HepG2 (cell line): ENCODE measurements at regions of chr2 and their contacts with region 1.

Region 1: DNA sequence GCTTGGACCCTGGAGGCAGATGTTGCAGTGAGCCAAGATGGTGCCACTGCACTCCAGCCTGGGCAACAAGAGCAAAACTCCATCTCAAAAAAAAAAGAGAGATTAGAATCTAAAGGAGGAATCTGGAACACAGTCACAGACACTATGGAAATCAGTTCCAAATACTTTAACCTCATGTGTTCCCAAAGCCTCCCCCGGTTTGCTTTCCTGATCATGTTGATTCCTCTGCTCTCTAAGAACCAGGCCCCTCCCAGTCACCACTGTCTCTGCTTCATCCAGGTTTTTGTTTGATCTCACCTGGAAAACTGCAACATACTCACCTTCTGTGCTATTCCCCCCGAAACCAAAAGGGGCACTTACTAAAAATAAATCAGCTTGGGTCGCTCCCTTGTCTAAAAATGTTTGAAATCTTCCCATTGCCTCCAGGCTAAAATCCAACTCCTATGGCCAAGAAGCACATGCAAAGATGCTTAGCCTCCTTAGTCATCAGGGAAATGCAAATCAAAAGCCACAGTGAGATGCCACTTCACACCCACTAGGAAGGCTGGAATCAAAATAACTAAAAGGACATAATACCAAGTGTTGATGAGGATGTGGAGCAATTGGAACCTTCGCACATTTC is 6.2 kb upstream of the NEU2 start:
- DNase-seq: no peak
- ATAC-seq: no peak
- H3K4me3 ChIP-seq: no peak overlapping the region
- H3K27ac ChIP-seq: no peak overlapping the region
- H3K4me1 ChIP-seq: peaks cover 3% of the 10 kb centered on the region; the same call in 1 of the 2 replicates
- H3K27me3 ChIP-seq: peaks cover 3 to 19% of the 10 kb centered on the region in 2 experiments; a peak in 4 of 5 replicates
- CTCF ChIP-seq: no peak
- EP300 ChIP-seq: no peak
- POLR2A ChIP-seq: no peak
- RAD21 ChIP-seq: no peak

Region 2: GRCh38 chr2:232979871-232980461 is 46.3 kb before region 1 on chr2:
- CTCF ChIA-PET with region 1: interaction called, 8 read pairs
- POLR2A ChIA-PET with region 1: no interaction called
- in situ Hi-C with region 1: no loop called
- intact Hi-C with region 1: loop called (anchors 1 kb)
- DNase-seq: peak; percentile 27
- ATAC-seq: peak; percentile 48
- H3K4me3 ChIP-seq: no peak overlapping the region
- H3K27ac ChIP-seq: no peak overlapping the region
- H3K4me1 ChIP-seq: no peaks in the 10 kb centered on the region
- H3K27me3 ChIP-seq: no peaks in the 10 kb centered on the region
- CTCF ChIP-seq: peak; percentile 36
- EP300 ChIP-seq: no peak
- POLR2A ChIP-seq: no peak
- RAD21 ChIP-seq: no peak

Region 3: DNA sequence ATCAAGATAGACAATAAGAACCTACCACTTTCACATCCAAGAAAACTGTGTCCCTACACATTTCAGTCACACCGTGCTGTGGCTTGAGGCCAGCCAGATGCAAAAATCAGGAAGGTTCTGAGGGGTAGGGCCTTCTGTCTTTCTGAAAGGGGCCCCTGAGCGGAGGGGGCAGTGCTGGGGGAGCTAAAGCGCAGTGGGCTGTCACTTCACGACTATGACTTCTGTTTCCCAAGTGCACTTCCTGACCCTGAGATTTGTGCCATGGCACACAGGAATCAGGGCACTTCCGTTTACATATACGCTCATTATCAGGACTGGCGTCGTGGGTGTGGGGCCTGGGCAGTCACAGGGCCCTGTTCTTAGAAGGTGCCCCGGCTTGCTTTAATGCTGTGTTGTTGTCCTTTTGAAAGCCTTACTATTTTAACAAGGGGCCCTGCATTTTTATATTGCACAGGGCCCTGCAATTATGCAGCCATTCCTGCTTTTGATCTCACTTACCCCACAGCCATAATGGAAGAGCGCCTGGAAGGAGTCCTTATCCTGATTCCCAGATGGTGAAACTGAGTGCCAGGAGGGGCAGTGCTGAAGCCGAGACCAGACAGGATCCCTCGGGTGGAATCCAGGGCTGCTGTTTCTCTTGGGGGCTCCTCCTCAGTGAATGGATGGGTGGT is 13.9 kb before region 1 on chr2:
- CTCF ChIA-PET with region 1: interaction called, 5 read pairs
- POLR2A ChIA-PET with region 1: interaction called, 23 read pairs
- in situ Hi-C with region 1: no loop called
- intact Hi-C with region 1: loop called (anchors 1 kb)
- DNase-seq: peak; percentile 65
- ATAC-seq: peak; percentile 53
- H3K4me3 ChIP-seq: peak overlapping the region; percentile 66 to 93 (median 80)
- H3K27ac ChIP-seq: peak overlapping the region; percentile 93
- H3K4me1 ChIP-seq: peaks cover 42% of the 10 kb centered on the region
- H3K27me3 ChIP-seq: no peaks in the 10 kb centered on the region; a peak in 1 of 5 replicates
- CTCF ChIP-seq: no peak
- EP300 ChIP-seq: peak in 1 of 2 experiments; percentile 55; a peak in 1 of 4 replicates
- POLR2A ChIP-seq: peak; percentile 34 to 42; a peak in 1 of 4 replicates
- RAD21 ChIP-seq: no peak

Region 4: DNA sequence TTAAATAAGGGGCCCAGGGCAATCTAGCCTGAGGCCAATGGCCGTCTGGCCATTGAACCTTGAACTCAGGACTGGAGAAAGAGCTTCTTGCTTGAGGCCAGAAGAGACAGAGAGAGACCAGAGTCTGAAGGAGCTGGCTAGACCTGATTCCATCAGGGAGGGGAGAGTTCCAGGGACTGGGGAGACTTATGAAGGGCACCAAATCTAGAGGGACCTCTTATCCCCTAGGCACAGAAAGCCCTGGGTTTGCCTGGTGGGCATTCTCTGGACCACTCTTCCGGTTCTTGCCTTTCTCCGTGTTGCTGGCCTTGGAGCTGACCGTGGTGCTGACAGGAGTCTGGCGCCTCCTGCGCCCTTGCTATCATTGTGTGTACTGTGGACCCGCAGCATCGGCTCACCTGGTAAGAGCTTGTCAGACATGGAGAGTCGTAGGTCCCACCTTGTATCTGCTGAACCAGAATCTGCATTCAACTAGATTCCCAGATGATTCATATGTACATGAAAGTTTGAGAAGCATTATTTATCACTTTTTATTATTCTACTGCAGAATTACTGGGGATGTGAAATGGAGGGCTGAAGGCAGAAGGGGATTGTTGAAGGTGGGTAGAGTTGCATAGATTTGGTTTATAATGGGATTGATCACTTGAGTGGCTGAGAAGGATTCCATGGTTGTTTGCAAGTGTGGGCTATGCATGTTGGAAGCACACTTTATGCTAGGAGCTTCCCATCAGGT is 886.6 kb after region 1 on chr2:
- CTCF ChIA-PET with region 1: no interaction called
- POLR2A ChIA-PET with region 1: no interaction called
- in situ Hi-C with region 1: no loop called
- intact Hi-C with region 1: no loop called
- DNase-seq: peak; percentile 41
- ATAC-seq: peak; percentile 88
- H3K4me3 ChIP-seq: no peak overlapping the region
- H3K27ac ChIP-seq: no peak overlapping the region
- H3K4me1 ChIP-seq: no peaks in the 10 kb centered on the region
- H3K27me3 ChIP-seq: peaks cover 0 to 5% of the 10 kb centered on the region in 2 experiments; a peak in 1 of 5 replicates
- CTCF ChIP-seq: no peak
- EP300 ChIP-seq: no peak
- POLR2A ChIP-seq: no peak
- RAD21 ChIP-seq: no peak